ENCODE measurements at regions of chr5 and their contacts with region 1.

Region 1: GRCh38 chr5:29697785-29698414 is 1495.6 kb upstream of the CDH6 start:
- DNase-seq: peak; percentile 39
- ATAC-seq: peak; percentile 99
- H3K4me3 ChIP-seq: no peak overlapping the region
- H3K27ac ChIP-seq: no peak overlapping the region
- H3K4me1 ChIP-seq: no peaks in the 10 kb centered on the region
- H3K27me3 ChIP-seq: no peaks in the 10 kb centered on the region
- CTCF ChIP-seq: peak; percentile 56
- EP300 ChIP-seq: no peak
- POLR2A ChIP-seq: no peak
- RAD21 ChIP-seq: no peak

Region 2: DNA sequence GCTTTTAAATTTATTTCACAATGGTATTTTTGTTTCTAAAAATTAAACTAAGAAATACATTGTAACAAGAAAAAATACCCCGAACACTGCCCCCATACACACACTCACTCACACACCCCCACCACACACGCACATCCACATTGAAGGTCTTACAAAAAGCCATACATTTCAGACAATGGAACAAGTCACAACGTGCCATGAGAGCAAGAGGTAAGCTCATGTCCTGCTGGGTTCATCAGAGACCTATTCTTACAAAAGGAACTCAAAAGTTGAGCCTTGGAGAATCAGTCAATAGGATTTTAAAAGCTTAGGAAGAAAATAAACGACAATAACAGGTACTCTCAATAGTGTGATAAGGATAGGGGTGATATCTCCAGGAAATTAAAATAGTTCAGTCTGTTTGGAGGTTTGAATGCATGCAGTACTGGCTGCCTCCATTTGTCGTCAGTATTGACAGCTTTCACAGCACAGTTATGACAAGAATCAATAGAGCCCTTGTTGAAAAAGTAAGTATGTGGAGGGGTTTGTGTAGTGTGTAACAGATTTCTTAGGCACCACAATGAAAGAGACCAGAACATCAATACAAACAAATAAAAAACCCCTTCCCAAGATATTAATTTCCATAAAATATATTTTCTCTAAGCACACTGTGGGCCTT is 330.6 kb before region 1 on chr5:
- CTCF ChIA-PET with region 1: no interaction called
- POLR2A ChIA-PET with region 1: no interaction called
- in situ Hi-C with region 1: no loop called
- intact Hi-C with region 1: loop called (anchors 2 kb)
- DNase-seq: peak; percentile 12
- ATAC-seq: peak; percentile 88
- H3K4me3 ChIP-seq: no peak overlapping the region
- H3K27ac ChIP-seq: no peak overlapping the region
- H3K4me1 ChIP-seq: no peaks in the 10 kb centered on the region
- H3K27me3 ChIP-seq: no peaks in the 10 kb centered on the region
- CTCF ChIP-seq: peak; percentile 50
- EP300 ChIP-seq: no peak
- POLR2A ChIP-seq: no peak
- RAD21 ChIP-seq: no peak

Measured in HepG2 (cell line).